ENCODE measurements at regions of chr6 and their contacts with region 1.

Region 1: GRCh38 chr6:3226848-3227362 is 548 bp downstream of the TUBB2B start:
- DNase-seq: no peak
- H3K4me3 ChIP-seq: peak overlapping the region; percentile 43 to 58
- H3K27ac ChIP-seq: no peak overlapping the region
- H3K4me1 ChIP-seq: peaks cover 13 to 42% of the 10 kb centered on the region in 2 donors
- H3K27me3 ChIP-seq: peaks cover 13% of the 10 kb centered on the region
- CTCF ChIP-seq: no peak

Region 2: GRCh38 chr6:3162565-3163247 is 64.2 kb before region 1 on chr6:
- intact Hi-C with region 1: loop called (anchors 5 kb)
- DNase-seq: peak in 1 of 2 donors; percentile 84
- H3K4me3 ChIP-seq: peak overlapping the region; percentile 84 to 92
- H3K27ac ChIP-seq: peak overlapping the region; percentile 90 to 95
- H3K4me1 ChIP-seq: peaks cover 0 to 4% of the 10 kb centered on the region in 2 donors
- H3K27me3 ChIP-seq: no peaks in the 10 kb centered on the region
- CTCF ChIP-seq: peak in 2 of 3 experiments; percentile 4 to 37

Region 3: GRCh38 chr6:3209114-3210023 is 17.5 kb before region 1 on chr6:
- intact Hi-C with region 1: loop called (anchors 2 kb)
- DNase-seq: peak in 1 of 2 donors; percentile 70
- H3K4me3 ChIP-seq: no peak overlapping the region
- H3K27ac ChIP-seq: peak overlapping the region; percentile 15 to 64
- H3K4me1 ChIP-seq: peaks cover 3 to 27% of the 10 kb centered on the region in 2 donors
- H3K27me3 ChIP-seq: no peaks in the 10 kb centered on the region
- CTCF ChIP-seq: no peak

Region 4: DNA sequence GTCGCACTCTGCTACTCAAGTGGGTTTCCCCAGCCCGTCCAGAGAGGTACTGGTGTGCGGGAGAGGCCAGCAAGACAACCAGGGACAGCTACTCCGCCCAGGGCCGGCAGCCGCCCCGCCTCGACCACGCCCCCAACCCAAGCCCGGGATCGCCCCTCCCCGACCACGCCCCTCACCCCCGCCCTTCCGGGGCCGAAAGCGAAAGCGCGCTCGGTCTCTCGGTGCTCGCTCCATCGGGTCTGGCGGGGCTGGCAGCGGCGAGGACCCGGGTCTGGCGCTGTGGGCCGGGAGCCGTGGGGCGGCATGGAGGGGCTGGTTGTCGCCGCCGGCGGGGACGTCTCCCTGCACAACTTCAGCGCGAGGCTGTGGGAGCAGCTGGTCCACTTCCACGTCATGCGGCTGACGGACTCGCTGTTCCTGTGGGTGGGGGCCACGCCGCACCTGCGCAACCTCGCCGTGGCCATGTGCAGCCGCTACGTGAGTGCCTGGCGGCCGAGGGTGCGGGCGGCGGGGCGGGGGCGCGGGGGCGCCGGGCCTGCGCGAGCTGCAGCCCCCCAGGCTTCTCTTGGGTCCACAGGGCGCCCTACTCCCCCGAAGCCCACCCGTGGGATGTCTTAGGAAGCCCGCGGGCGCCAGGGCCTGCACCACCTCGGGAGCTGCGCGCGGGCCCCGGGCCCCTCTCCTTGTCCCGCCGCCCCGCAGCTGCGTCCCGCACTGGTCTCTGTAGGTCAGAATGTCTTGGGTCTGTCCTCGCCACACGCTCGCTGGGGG is 32.0 kb after region 1 on chr6 and contains the start of gene PSMG4:
- intact Hi-C with region 1: no loop called
- DNase-seq: peak; percentile 65 to 96
- H3K4me3 ChIP-seq: peak within 1 kb of the TSS; percentile 69 to 83
- H3K27ac ChIP-seq: peak within 1 kb of the TSS; percentile 44 to 60
- H3K4me1 ChIP-seq: peaks cover 3 to 15% of the 10 kb centered on the region in 2 donors
- H3K27me3 ChIP-seq: no peaks in the 10 kb centered on the region
- CTCF ChIP-seq: no peak
- total RNA-seq, gene PSMG4: 23.9 TPM

Region 5: GRCh38 chr6:3294921-3295871 is 68.3 kb after region 1 on chr6:
- intact Hi-C with region 1: no loop called
- DNase-seq: no peak
- H3K4me3 ChIP-seq: no peak overlapping the region
- H3K27ac ChIP-seq: no peak overlapping the region
- H3K4me1 ChIP-seq: no peaks in the 10 kb centered on the region
- H3K27me3 ChIP-seq: no peaks in the 10 kb centered on the region
- CTCF ChIP-seq: no peak